ENCODE measurements at regions of chr2 and their contacts with region 1.

Region 1: DNA sequence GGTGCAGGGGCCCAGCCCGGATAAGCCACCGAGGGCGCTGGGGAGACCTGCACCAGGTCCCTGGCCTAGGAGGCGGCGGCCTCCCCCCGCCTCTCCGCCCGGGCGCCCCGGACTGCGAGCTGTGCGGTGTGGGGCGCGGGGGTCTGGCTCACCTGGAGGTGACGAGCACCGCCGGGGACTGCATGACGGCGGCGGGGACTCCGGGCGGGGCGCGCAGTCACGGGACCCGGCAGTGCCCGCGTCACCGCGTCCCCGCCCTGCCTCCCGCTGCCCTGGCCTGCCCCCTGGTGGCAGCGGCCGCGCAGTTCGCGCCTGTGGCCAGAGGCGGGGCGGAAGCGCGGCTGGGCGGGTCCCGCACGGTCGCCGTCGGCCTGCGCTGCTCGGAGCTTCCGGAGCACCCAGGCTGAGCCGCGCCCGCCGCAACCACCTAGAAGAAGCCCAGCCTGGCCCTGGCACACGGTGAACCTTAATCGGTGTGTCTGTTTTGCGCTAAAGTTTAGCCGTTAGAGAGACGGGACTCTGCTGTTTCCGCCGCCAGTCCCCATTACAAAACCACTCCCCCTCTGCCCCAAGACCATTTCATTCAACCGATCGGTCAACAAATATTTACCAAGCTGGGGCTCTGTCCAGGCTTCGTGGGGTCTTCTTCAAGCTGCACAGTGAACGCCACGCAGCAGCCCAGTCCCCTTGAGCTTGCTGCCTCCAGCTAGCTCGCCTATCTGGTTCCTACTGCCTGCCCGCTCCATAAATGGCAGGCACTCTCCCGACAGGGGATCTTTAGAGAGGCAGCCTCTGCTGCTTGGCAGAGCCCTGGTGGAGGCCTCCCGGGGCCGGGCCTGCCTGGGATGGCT is at the start of gene HS1BP3:
- DNase-seq: peak; percentile 82 to 85
- ATAC-seq: peak; percentile 82 to 97
- H3K4me3 ChIP-seq: peak within 1 kb of the TSS; percentile 89
- H3K27ac ChIP-seq: peak within 1 kb of the TSS; percentile 94
- H3K4me1 ChIP-seq: peaks cover 12% of the 10 kb centered on the region; the same call in 2 of the 3 replicates
- CTCF ChIP-seq: peak; percentile 99
- EP300 ChIP-seq: no peak
- POLR2A ChIP-seq: peak; percentile 92
- RAD21 ChIP-seq: peak; percentile 53 to 84
- polyA plus RNA-seq, gene HS1BP3: 12.4 and 13.8 TPM in 2 replicates

Region 2: DNA sequence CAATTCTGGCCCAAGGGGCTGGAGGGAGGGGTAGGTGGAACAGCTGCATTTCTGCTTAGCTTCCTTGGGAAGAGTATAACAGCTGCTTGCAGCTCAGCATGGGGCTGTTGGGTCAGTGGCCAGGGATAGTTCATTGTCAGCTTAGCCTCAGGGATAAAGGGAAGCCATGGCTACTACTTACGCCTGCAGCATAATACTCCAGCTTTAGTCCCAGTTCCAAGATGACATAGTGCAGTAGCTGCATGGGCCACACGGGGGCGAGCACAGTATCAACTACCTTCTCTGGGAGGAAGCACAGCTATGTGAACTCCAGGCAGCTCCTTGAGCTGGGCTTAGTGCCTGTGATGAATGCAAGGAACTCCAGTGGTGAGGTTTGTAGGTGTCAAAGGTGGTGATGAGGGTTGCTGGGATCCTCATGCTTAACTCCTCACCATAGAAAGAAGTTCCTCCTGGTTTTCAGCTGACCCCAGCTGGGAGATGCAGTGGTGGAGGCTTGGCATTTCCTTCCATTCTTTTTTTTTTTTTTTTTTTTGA is 239.7 kb before region 1 on chr2:
- CTCF ChIA-PET with region 1: interaction called, 28 read pairs
- POLR2A ChIA-PET with region 1: no interaction called
- DNase-seq: peak; percentile 79 to 86
- ATAC-seq: peak; percentile 100
- H3K4me3 ChIP-seq: no peak overlapping the region
- H3K27ac ChIP-seq: no peak overlapping the region
- H3K4me1 ChIP-seq: peaks cover 4% of the 10 kb centered on the region; the same call in 1 of the 3 replicates
- CTCF ChIP-seq: peak; percentile 81
- EP300 ChIP-seq: no peak
- POLR2A ChIP-seq: no peak
- RAD21 ChIP-seq: peak; percentile 79 to 86

Region 3: GRCh38 chr2:20438334-20439192 is 212.5 kb before region 1 on chr2:
- CTCF ChIA-PET with region 1: interaction called, 42 read pairs
- POLR2A ChIA-PET with region 1: interaction called, 9 read pairs
- DNase-seq: peak; percentile 78 to 91
- ATAC-seq: peak; percentile 80 to 86
- H3K4me3 ChIP-seq: peak overlapping the region; percentile 35
- H3K27ac ChIP-seq: peak overlapping the region; percentile 79 to 87
- H3K4me1 ChIP-seq: peaks cover 38% of the 10 kb centered on the region
- CTCF ChIP-seq: no peak
- EP300 ChIP-seq: peak; percentile 76 to 88; a peak in 2 of 5 replicates
- POLR2A ChIP-seq: no peak
- RAD21 ChIP-seq: no peak

Region 4: GRCh38 chr2:20675701-20676352 is 24.7 kb after region 1 on chr2:
- CTCF ChIA-PET with region 1: interaction called, 13 read pairs
- POLR2A ChIA-PET with region 1: no interaction called
- DNase-seq: peak in 1 of 2 experiments; percentile 41
- ATAC-seq: peak; percentile 80 to 89
- H3K4me3 ChIP-seq: no peak overlapping the region
- H3K27ac ChIP-seq: peak overlapping the region; percentile 33 to 55; a peak in 3 of 6 replicates
- H3K4me1 ChIP-seq: peaks cover 21% of the 10 kb centered on the region
- CTCF ChIP-seq: no peak
- EP300 ChIP-seq: no peak
- POLR2A ChIP-seq: no peak
- RAD21 ChIP-seq: no peak

Measured in A549 (cell line).